ENCODE measurements at regions of chr14 and their contacts with region 1.

Region 1: DNA sequence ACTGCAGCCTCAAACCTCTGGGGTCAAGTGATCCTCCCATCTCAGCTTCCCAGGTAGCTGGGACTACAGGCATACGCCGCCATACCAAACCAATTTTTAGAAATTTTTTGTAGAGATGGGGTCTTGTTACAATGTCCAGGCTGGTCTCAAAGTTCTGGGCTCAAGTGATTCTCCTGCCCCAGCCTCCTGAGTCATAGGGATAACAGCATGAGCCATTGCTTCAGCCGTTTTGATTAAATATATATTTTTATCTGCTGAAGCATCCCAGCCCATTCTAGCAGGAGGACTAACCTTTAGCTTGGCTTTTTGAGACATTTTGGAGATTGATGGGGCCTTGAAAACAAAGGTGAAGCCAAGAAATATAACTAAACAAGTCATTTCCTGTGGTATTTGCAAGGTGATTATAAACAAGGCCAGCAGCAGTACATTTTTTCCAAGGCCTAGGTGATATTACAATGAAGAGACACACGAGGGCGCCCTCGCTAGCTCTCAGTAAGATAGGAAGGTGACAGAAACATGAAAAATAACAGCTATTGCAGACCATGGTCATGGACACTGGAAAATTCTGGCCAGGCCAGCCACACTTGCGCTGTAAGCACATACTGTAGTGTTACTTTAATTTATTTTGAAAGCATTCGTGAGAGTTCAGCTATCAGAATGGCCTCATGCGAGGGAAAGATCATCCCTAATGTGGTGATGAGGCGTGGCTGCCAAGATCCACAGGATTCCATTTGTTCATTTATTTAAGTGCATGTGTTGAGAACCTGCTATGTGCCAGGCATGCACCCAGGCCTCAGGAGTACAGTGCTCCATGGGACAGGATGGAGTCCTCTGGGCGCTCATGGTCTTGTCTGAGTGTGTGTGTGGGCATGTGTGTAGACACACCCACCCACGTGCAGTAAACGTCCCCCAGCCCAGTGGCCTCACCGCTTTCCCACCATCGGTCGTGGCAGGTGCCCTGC is 63.5 kb downstream of the DGLUCY start:
- DNase-seq: peak; percentile 67
- H3K27ac ChIP-seq: peak overlapping the region; percentile 51
- CTCF ChIP-seq: peak; percentile 87

Region 2: GRCh38 chr14:90903101-90903500 is 274.3 kb before region 1 on chr14:
- CTCF ChIA-PET with region 1: interaction called, 30 read pairs
- POLR2A ChIA-PET with region 1: no interaction called
- DNase-seq: peak; percentile 74
- H3K27ac ChIP-seq: no peak overlapping the region
- CTCF ChIP-seq: peak; percentile 80

Region 3: DNA sequence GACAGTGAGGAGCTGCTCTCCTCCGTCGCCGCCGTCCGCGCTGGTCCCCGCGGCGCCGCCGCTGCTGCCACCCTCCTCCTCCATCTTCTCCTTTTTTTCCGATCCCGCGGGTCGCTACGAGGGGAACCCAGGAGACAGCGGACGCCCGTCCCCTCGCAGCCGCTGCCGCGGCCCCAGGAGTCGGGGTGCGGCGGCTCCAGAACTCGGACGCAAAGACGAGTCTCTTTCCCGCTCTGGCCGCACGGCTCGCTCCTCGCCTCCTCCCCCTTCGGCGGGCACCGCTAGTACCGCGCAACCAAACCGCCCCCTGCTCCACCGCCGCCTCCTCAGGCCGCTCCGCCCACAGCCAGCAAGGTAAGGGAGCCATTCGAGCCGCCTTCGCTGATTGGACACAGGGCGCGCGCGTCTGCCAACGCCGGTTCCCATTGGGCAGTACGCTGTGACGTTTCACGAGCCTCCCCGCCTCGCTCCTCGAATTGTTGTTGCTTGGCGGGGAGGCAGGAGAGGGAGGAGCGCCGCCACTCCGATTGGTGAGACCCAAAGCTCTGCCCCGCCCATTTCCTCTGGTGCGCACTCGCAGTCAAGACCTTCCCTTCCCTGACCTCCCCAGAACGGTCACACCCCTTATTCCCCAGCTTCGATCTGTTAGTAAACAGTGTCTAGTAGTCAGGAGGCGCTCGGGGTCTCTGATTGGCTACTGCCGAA is 116.9 kb before region 1 on chr14 and contains the start of gene RPS6KA5:
- CTCF ChIA-PET with region 1: interaction called, 15 read pairs
- POLR2A ChIA-PET with region 1: no interaction called
- DNase-seq: peak; percentile 99
- H3K27ac ChIP-seq: peak within 1 kb of the TSS; percentile 95
- CTCF ChIP-seq: no peak

Region 4: DNA sequence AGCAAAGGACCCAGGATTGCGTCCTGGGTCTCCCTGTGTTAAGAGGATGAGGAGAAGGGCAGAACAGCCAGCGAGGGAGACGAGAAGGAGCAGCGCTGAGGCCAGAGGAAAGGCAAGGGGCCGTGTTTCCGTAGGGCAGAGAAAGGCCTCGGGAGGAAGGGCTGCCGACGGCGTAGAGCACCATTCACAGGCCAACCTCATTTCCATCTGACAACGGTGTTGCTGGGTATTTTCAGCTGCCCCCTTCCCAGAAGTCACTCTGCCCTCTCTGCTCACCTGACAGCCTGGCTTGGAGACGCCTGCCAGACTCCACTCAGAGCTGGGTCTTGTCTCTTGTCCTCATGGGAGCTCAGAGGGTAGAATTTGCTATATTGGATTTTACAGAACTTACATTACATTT is 15.7 kb after region 1 on chr14:
- CTCF ChIA-PET with region 1: interaction called, 12 read pairs
- POLR2A ChIA-PET with region 1: no interaction called
- DNase-seq: no peak
- H3K27ac ChIP-seq: no peak overlapping the region
- CTCF ChIP-seq: no peak

Region 5: DNA sequence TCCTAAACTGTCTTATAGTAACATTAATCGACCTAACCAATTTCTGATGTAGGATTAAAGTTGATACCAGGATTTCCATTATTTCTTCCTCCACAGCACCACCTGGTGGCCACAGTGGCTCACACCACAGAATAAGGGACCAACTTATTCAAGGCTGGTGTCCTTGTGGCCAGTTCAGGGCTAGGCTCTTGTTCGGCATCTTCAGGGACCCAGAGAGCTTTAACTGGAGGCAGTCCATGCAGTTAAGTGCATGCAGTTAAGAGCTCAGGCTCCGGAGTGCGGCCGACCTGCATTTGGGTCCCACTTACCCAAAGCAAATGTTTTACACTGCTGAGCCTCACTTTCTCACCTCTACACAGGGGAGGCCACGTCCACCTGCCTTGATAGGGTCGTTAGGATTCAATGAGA is 109.2 kb after region 1 on chr14:
- CTCF ChIA-PET with region 1: interaction called, 40 read pairs
- POLR2A ChIA-PET with region 1: no interaction called
- DNase-seq: peak; percentile 74
- H3K27ac ChIP-seq: peak overlapping the region; percentile 44
- CTCF ChIP-seq: peak; percentile 85

Measured in RWPE1 (cell line).